Posterior vena cava (tissue), 2 donors: ENCODE measurements at regions of chr10 and their contacts with region 1.

Region 1: GRCh38 chr10:68296843-68297663 is 34.8 kb upstream of the HNRNPH3 start:
- DNase-seq: no peak

Region 2: DNA sequence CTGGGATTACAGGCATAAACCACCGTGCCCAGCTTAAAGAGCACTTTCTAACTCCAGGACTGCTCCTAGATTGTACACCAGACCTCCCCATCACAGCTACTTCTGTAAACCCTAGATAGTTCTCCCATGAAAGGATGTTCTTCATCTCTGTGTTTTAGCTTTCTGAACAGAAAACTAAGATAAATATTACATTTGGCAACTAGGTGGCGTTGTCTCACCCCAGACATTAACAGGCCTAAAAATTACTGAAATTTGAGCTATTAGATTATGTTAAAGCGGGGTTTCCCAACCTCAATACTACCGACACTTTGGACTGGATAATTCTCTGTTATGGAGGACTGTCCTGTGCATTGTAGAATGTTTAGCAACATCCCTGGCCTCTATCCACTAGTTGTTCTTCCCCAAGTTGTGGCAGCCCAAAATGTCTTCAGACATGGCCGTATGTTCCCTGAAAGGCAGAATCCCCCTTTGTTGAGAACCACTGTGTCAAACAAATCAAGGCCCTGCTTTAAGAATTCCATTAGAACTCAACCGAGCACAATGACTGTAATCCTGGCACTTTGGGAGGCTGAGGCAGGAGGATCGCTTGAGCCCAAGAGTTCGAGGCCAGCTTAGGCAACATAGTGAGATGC is 84.2 kb before region 1 on chr10:
- intact Hi-C with region 1: loop called in 1 of 2 experiments (anchors 10 kb)
- DNase-seq: no peak